ENCODE measurements at regions of chr2 and their contacts with region 1.

Region 1: GRCh38 chr2:174465327-174465726 is 21.5 kb downstream of the GPR155 start:
- DNase-seq: no peak
- ATAC-seq: no peak
- H3K4me3 Mint-ChIP-seq: no peak overlapping the region
- H3K27ac Mint-ChIP-seq: no peak overlapping the region
- H3K4me1 Mint-ChIP-seq: no peaks in the 10 kb centered on the region
- H3K27me3 Mint-ChIP-seq: no peaks in the 10 kb centered on the region
- CTCF ChIP-seq: no peak

Region 2: GRCh38 chr2:174445248-174445647 is 20.1 kb before region 1 on chr2:
- CTCF ChIA-PET with region 1: interaction called, 12 read pairs
- POLR2A ChIA-PET with region 1: no interaction called
- intact Hi-C with region 1: no loop called
- DNase-seq: no peak
- ATAC-seq: no peak
- H3K4me3 Mint-ChIP-seq: no peak overlapping the region
- H3K27ac Mint-ChIP-seq: no peak overlapping the region
- H3K4me1 Mint-ChIP-seq: peaks cover 3% of the 10 kb centered on the region
- H3K27me3 Mint-ChIP-seq: no peaks in the 10 kb centered on the region
- CTCF ChIP-seq: no peak

Region 3: DNA sequence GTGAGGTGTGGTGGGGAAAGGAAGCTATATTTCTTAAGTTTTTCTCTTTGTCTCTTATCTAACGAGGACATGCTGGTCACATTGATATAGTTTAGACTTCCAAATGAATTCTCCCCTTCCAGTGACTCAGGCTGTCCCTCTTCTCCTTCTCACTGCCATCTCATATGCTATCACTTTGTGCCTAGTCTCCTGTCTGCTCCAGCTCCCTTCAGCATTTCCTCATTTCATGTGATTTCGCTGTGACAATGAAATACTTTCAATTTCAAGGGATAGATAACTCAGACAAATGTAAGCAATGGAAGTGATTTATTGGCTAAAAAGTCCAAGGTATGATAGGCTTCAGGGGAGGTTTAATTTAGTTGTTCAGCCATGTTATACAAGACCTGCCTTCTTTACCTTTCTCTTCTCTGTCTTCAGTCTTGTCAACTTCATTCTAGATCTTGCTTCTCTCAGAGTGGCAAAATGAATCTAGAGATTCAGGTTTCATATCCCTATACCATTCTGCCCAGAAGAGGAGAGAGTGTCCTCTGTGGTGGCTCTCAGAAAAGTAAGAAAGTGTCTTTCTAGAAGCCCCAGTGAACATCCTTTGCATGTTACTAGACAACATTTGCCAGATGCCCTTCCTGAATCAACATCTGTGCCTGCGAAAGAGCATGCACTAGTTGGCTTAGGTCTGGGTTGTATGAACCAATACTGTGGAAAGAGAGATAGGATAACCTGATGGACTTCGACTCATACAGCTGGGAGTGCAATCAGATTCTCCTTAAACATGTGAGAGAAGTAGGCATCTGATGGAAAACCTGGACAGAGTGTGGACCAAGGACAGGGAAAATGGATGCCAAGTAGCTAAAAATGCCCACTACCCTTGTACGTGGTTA is 51.4 kb after region 1 on chr2:
- CTCF ChIA-PET with region 1: interaction called, 33 read pairs
- POLR2A ChIA-PET with region 1: interaction called, 5 read pairs
- intact Hi-C with region 1: no loop called
- DNase-seq: no peak
- ATAC-seq: no peak
- H3K4me3 Mint-ChIP-seq: no peak overlapping the region
- H3K27ac Mint-ChIP-seq: no peak overlapping the region
- H3K4me1 Mint-ChIP-seq: peaks cover 14% of the 10 kb centered on the region
- H3K27me3 Mint-ChIP-seq: no peaks in the 10 kb centered on the region
- CTCF ChIP-seq: no peak

Region 4: GRCh38 chr2:174535821-174536220 is 70.5 kb after region 1 on chr2:
- CTCF ChIA-PET with region 1: interaction called, 13 read pairs
- POLR2A ChIA-PET with region 1: no interaction called
- intact Hi-C with region 1: no loop called
- DNase-seq: no peak
- ATAC-seq: no peak
- H3K4me3 Mint-ChIP-seq: no peak overlapping the region
- H3K27ac Mint-ChIP-seq: no peak overlapping the region
- H3K4me1 Mint-ChIP-seq: no peaks in the 10 kb centered on the region
- H3K27me3 Mint-ChIP-seq: no peaks in the 10 kb centered on the region
- CTCF ChIP-seq: no peak

Region 5: DNA sequence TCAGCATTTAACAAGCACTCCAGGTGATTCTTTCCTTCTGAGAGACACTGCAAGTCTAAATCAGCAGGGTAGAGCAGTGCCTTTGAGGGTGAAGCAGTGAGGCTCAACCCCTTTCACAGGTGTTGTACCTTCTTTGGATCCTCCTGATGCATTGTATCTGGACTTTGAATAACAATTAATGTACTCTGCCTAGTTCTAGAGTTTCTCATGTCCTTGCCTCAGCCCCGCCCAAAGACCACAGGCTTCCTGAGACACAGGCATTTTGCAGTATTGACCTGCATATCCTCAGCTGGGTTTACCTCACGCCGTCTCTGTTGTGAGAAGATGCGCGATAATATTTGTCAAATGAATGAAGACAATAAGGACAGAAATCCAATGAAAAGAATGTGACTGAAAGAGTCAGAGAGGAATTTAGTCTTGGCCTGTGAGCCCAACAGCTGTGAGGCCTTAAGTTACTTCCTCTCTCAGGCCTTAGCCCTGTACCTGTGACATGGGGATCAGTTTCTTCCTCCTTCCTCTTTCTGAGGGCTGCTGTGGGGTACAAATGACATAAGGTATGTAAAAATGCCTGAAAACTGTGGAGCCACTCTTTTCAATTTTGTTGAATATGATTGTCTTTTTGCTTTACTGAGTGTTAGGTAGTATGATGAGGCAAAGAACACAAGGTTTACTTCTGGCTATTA is 88.6 kb after region 1 on chr2:
- CTCF ChIA-PET with region 1: interaction called, 136 read pairs
- POLR2A ChIA-PET with region 1: no interaction called
- intact Hi-C with region 1: loop called (anchors 5 kb)
- DNase-seq: peak; percentile 30
- ATAC-seq: peak; percentile 29
- H3K4me3 Mint-ChIP-seq: no peak overlapping the region
- H3K27ac Mint-ChIP-seq: peak overlapping the region; percentile 92
- H3K4me1 Mint-ChIP-seq: peaks cover 35% of the 10 kb centered on the region
- H3K27me3 Mint-ChIP-seq: no peaks in the 10 kb centered on the region
- CTCF ChIP-seq: no peak

Region 6: DNA sequence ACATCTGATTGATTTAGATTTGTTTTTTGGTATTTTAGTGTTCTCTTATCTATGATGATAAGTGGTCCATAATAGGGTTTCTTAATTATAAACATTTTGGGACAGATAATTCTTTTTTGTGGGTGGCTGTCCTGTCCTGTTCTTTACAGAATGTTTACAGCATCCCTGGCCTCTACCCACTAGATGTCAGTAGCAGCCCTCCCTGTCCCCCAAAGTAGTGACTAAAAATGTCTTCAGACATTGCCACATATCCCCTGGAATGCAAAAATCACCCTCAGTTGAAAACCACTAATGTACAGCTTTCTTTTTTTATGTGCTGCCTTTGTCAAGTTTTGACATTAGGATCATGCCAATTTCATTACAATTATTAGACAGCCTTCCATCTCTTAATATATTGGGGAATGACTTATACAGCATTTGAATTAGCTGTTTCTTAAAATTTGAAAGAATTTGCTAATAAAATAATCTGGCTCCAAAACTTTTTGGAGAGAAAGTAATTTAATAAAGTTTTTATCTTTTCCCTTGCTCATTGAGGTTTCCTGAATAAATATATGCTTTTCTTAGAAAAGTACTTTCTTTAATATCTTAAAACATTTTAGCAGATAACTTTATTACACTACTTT is 112.8 kb after region 1 on chr2:
- CTCF ChIA-PET with region 1: interaction called, 26 read pairs
- POLR2A ChIA-PET with region 1: interaction called, 4 read pairs
- intact Hi-C with region 1: no loop called
- DNase-seq: peak; percentile 71
- ATAC-seq: peak; percentile 71
- H3K4me3 Mint-ChIP-seq: no peak overlapping the region
- H3K27ac Mint-ChIP-seq: peak overlapping the region; percentile 49
- H3K4me1 Mint-ChIP-seq: peaks cover 75% of the 10 kb centered on the region
- H3K27me3 Mint-ChIP-seq: no peaks in the 10 kb centered on the region
- CTCF ChIP-seq: peak; percentile 63

Region 7: DNA sequence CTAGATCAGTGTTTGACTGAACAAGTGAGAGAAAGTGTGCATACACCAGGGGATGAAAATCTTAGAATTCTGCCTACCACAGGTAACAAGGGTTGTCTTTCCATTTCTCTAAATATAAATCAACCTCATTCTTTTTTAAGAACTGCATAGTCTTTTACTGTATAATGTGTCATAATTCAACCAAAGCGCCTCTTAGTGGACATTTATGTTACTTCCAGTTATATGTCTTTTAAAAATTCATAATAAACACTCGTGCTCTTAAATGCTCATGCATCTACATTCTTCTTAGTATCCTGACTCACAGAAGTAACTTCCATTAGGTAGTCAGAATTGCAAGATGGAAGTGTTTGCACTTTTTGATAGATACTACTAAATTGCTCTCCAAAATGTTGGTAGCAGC is 222.8 kb after region 1 on chr2:
- CTCF ChIA-PET with region 1: interaction called, 64 read pairs
- POLR2A ChIA-PET with region 1: no interaction called
- intact Hi-C with region 1: loop called (anchors 5 kb)
- DNase-seq: no peak
- ATAC-seq: peak; percentile 69
- H3K4me3 Mint-ChIP-seq: no peak overlapping the region
- H3K27ac Mint-ChIP-seq: no peak overlapping the region
- H3K4me1 Mint-ChIP-seq: peaks cover 42% of the 10 kb centered on the region
- H3K27me3 Mint-ChIP-seq: peaks cover 1% of the 10 kb centered on the region
- CTCF ChIP-seq: peak; percentile 73